MCF 10A (cell line): ENCODE measurements at regions of chr1 and their contacts with region 1.

Region 1: GRCh38 chr1:170929835-170930554 is 5.3 kb upstream of the MROH9 start:
- DNase-seq: peak; percentile 83
- H3K4me3 Mint-ChIP-seq: no peak overlapping the region
- H3K27ac Mint-ChIP-seq: peak overlapping the region; percentile 4
- H3K4me1 Mint-ChIP-seq: peaks cover 12% of the 10 kb centered on the region
- H3K27me3 Mint-ChIP-seq: no peaks in the 10 kb centered on the region
- CTCF ChIP-seq: peak; percentile 78

Region 2: GRCh38 chr1:170010443-170010842 is 919.6 kb before region 1 on chr1:
- CTCF ChIA-PET with region 1: interaction called, 6 read pairs
- POLR2A ChIA-PET with region 1: no interaction called
- intact Hi-C with region 1: loop called (anchors 1 kb)
- DNase-seq: peak; percentile 74
- H3K4me3 Mint-ChIP-seq: no peak overlapping the region
- H3K27ac Mint-ChIP-seq: no peak overlapping the region
- H3K4me1 Mint-ChIP-seq: no peaks in the 10 kb centered on the region
- H3K27me3 Mint-ChIP-seq: no peaks in the 10 kb centered on the region
- CTCF ChIP-seq: peak; percentile 54

Region 3: GRCh38 chr1:170685166-170685565 is 244.8 kb before region 1 on chr1:
- CTCF ChIA-PET with region 1: interaction called, 24 read pairs
- POLR2A ChIA-PET with region 1: no interaction called
- intact Hi-C with region 1: loop called (anchors 1 kb)
- DNase-seq: no peak
- H3K4me3 Mint-ChIP-seq: no peak overlapping the region
- H3K27ac Mint-ChIP-seq: no peak overlapping the region
- H3K4me1 Mint-ChIP-seq: peaks cover 11% of the 10 kb centered on the region
- H3K27me3 Mint-ChIP-seq: no peaks in the 10 kb centered on the region
- CTCF ChIP-seq: no peak

Region 4: GRCh38 chr1:170908942-170909341 is 21.1 kb before region 1 on chr1:
- CTCF ChIA-PET with region 1: interaction called, 17 read pairs
- POLR2A ChIA-PET with region 1: no interaction called
- intact Hi-C with region 1: no loop called
- DNase-seq: no peak
- H3K4me3 Mint-ChIP-seq: no peak overlapping the region
- H3K27ac Mint-ChIP-seq: no peak overlapping the region
- H3K4me1 Mint-ChIP-seq: peaks cover 6% of the 10 kb centered on the region
- H3K27me3 Mint-ChIP-seq: no peaks in the 10 kb centered on the region
- CTCF ChIP-seq: no peak